GM12878 (cell line): ENCODE measurements at regions of chr5 and their contacts with region 1.

Region 1: GRCh38 chr5:100777680-100778281 is 125.3 kb downstream of the ST8SIA4 start:
- DNase-seq: peak; percentile 80
- ATAC-seq: peak; percentile 72
- H3K4me3 ChIP-seq: peak overlapping the region; percentile 20; the same call in 1 of the 2 replicates
- H3K27ac ChIP-seq: peak overlapping the region; percentile 55
- H3K4me1 ChIP-seq: peaks cover 27% of the 10 kb centered on the region
- H3K27me3 ChIP-seq: no peaks in the 10 kb centered on the region
- CTCF ChIP-seq: no peak
- EP300 ChIP-seq: peak; percentile 73 to 94
- POLR2A ChIP-seq: no peak
- RAD21 ChIP-seq: no peak

Region 2: DNA sequence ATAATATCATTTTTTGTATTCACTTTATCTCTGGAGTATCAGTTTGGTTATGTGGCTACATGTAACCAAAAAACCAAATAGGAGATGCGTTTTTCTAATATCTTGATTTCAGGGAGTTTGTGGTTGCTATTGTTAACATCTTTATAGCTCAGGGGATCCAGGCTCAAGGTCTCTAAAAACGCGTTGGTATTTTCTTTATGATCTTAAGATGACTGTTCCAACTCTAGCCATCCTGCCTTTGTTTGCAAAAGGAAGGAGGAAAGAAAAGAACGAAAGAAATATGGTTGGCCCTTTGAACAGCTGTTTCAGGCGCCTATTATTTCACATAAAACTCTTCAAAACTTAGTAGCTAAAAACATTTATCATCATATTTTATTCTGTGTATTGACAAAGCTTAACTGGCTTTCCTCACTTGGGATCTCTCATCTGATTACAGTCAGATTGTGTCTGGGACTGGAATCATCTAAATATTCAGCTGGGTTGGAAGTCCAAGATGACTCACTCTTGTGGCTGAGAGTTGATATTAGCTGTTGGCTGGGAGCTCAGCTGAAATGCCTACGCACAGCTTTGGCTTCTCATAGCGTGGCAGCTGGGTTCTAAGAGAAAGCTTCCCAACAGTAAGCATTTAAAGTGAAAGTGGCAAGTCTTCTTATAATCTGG is 182.5 kb before region 1 on chr5:
- CTCF ChIA-PET with region 1: no interaction called
- POLR2A ChIA-PET with region 1: no interaction called
- RAD21 ChIA-PET with region 1: no interaction called
- SMC1A ChIA-PET with region 1: no interaction called
- in situ Hi-C with region 1: no loop called
- intact Hi-C with region 1: no loop called
- DNase-seq: no peak
- ATAC-seq: peak; percentile 22; the same call in 1 of the 3 replicates
- H3K4me3 ChIP-seq: no peak overlapping the region
- H3K27ac ChIP-seq: no peak overlapping the region
- H3K4me1 ChIP-seq: no peaks in the 10 kb centered on the region
- H3K27me3 ChIP-seq: no peaks in the 10 kb centered on the region
- CTCF ChIP-seq: no peak
- EP300 ChIP-seq: no peak
- POLR2A ChIP-seq: no peak
- RAD21 ChIP-seq: no peak

Region 3: GRCh38 chr5:100790170-100790665 is 12.4 kb after region 1 on chr5:
- CTCF ChIA-PET with region 1: interaction called, 28 read pairs
- POLR2A ChIA-PET with region 1: interaction called, 5 read pairs
- RAD21 ChIA-PET with region 1: interaction called, 44 read pairs
- SMC1A ChIA-PET with region 1: interaction called, 81 read pairs
- in situ Hi-C with region 1: no loop called
- intact Hi-C with region 1: no loop called
- DNase-seq: no peak
- ATAC-seq: peak; percentile 80
- H3K4me3 ChIP-seq: no peak overlapping the region
- H3K27ac ChIP-seq: no peak overlapping the region
- H3K4me1 ChIP-seq: peaks cover 12% of the 10 kb centered on the region
- H3K27me3 ChIP-seq: no peaks in the 10 kb centered on the region
- CTCF ChIP-seq: peak in 1 of 3 experiments; percentile 31; a peak in 2 of 6 replicates
- EP300 ChIP-seq: no peak
- POLR2A ChIP-seq: no peak
- RAD21 ChIP-seq: no peak

Region 4: DNA sequence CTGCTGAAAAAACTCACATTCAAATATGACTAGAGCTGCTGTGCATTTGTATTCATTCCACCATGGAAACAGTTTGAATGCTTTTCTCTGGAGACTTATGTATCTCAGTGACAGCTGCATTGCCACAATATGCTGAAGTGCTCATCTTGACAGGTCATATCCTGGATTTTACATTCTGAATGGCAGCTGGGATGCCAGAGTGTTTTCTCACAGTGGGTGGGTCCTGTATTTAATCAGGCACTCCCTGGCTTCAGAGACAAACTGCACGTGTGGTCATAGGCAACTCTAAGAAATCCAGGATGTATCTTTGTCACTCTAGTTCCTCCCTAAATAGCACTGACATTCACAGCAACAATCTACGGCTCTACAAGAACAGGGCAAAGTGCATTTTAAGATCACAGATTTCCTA is 49.7 kb after region 1 on chr5:
- CTCF ChIA-PET with region 1: interaction called, 16 read pairs
- POLR2A ChIA-PET with region 1: interaction called, 11 read pairs
- RAD21 ChIA-PET with region 1: interaction called, 17 read pairs
- SMC1A ChIA-PET with region 1: interaction called, 55 read pairs
- in situ Hi-C with region 1: loop called (anchors 5 kb)
- intact Hi-C with region 1: loop called (anchors 1 kb)
- DNase-seq: no peak
- ATAC-seq: peak; percentile 29
- H3K4me3 ChIP-seq: peak overlapping the region; percentile 44; the same call in 1 of the 2 replicates
- H3K27ac ChIP-seq: peak overlapping the region; percentile 95
- H3K4me1 ChIP-seq: peaks cover 32% of the 10 kb centered on the region
- H3K27me3 ChIP-seq: no peaks in the 10 kb centered on the region
- CTCF ChIP-seq: no peak
- EP300 ChIP-seq: no peak
- POLR2A ChIP-seq: no peak
- RAD21 ChIP-seq: no peak

Region 5: GRCh38 chr5:100852988-100853449 is 75.2 kb after region 1 on chr5:
- CTCF ChIA-PET with region 1: interaction called, 4 read pairs
- POLR2A ChIA-PET with region 1: interaction called, 6 read pairs
- RAD21 ChIA-PET with region 1: interaction called, 14 read pairs
- SMC1A ChIA-PET with region 1: interaction called, 17 read pairs
- in situ Hi-C with region 1: no loop called
- intact Hi-C with region 1: loop called (anchors 2 kb)
- DNase-seq: peak; percentile 89
- ATAC-seq: peak; percentile 89
- H3K4me3 ChIP-seq: peak overlapping the region; percentile 21; the same call in 1 of the 2 replicates
- H3K27ac ChIP-seq: peak overlapping the region; percentile 94
- H3K4me1 ChIP-seq: peaks cover 38% of the 10 kb centered on the region
- H3K27me3 ChIP-seq: no peaks in the 10 kb centered on the region
- CTCF ChIP-seq: no peak
- EP300 ChIP-seq: peak; percentile 95 to 96
- POLR2A ChIP-seq: no peak
- RAD21 ChIP-seq: peak; percentile 20; the same call in 1 of the 2 replicates

Region 6: GRCh38 chr5:100909034-100909433 is 131.3 kb after region 1 on chr5:
- CTCF ChIA-PET with region 1: interaction called, 232 read pairs
- POLR2A ChIA-PET with region 1: interaction called, 4 read pairs
- RAD21 ChIA-PET with region 1: interaction called, 345 read pairs
- SMC1A ChIA-PET with region 1: interaction called, 389 read pairs
- in situ Hi-C with region 1: loop called (anchors 5 kb)
- intact Hi-C with region 1: no loop called
- DNase-seq: no peak
- ATAC-seq: no peak
- H3K4me3 ChIP-seq: no peak overlapping the region
- H3K27ac ChIP-seq: no peak overlapping the region
- H3K4me1 ChIP-seq: no peaks in the 10 kb centered on the region
- H3K27me3 ChIP-seq: no peaks in the 10 kb centered on the region
- CTCF ChIP-seq: no peak
- EP300 ChIP-seq: no peak
- POLR2A ChIP-seq: no peak
- RAD21 ChIP-seq: no peak

Region 7: DNA sequence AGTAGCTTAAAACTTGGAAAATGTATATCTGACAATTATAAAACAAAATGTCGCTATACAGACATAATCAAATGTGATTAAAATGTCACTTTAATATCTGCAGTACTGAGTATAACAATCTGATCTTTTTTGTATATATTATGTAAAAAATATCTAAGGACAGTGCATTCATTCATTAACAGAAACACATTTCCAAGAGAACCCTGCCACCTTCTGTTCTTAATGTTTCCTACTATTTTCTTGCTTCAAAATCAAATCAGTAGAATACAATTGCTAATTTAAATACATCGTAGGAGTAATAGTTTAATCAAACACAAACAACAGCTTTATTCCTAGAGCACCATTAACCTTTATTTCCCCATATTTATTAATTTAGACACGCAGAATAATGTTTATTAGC is 267.9 kb after region 1 on chr5:
- CTCF ChIA-PET with region 1: interaction called, 17 read pairs
- POLR2A ChIA-PET with region 1: no interaction called
- RAD21 ChIA-PET with region 1: interaction called, 15 read pairs
- SMC1A ChIA-PET with region 1: interaction called, 6 read pairs
- in situ Hi-C with region 1: no loop called
- intact Hi-C with region 1: loop called (anchors 2 kb)
- DNase-seq: no peak
- ATAC-seq: peak; percentile 55
- H3K4me3 ChIP-seq: no peak overlapping the region
- H3K27ac ChIP-seq: no peak overlapping the region
- H3K4me1 ChIP-seq: no peaks in the 10 kb centered on the region
- H3K27me3 ChIP-seq: no peaks in the 10 kb centered on the region
- CTCF ChIP-seq: peak in 1 of 3 experiments; percentile 5; a peak in 2 of 6 replicates
- EP300 ChIP-seq: no peak
- POLR2A ChIP-seq: no peak
- RAD21 ChIP-seq: peak; percentile 70